H1 (cell line): ENCODE measurements at regions of chr7 and their contacts with region 1.

Region 1: GRCh38 chr7:130205084-130205947 is at the start of gene TMEM209:
- DNase-seq: peak; percentile 93 to 96
- H3K4me3 ChIP-seq: peak within 1 kb of the TSS; percentile 88 to 98 (median 92)
- H3K27ac ChIP-seq: peak within 1 kb of the TSS; percentile 97
- H3K4me1 ChIP-seq: no peaks in the 10 kb centered on the region
- H3K27me3 ChIP-seq: no peaks in the 10 kb centered on the region
- CTCF ChIP-seq: no peak
- EP300 ChIP-seq: no peak
- POLR2A ChIP-seq: peak; percentile 91 to 98
- RAD21 ChIP-seq: no peak; a peak in 1 of 4 replicates
- total RNA-seq, gene TMEM209: 25.6 and 28.5 TPM in 2 replicates

Region 2: DNA sequence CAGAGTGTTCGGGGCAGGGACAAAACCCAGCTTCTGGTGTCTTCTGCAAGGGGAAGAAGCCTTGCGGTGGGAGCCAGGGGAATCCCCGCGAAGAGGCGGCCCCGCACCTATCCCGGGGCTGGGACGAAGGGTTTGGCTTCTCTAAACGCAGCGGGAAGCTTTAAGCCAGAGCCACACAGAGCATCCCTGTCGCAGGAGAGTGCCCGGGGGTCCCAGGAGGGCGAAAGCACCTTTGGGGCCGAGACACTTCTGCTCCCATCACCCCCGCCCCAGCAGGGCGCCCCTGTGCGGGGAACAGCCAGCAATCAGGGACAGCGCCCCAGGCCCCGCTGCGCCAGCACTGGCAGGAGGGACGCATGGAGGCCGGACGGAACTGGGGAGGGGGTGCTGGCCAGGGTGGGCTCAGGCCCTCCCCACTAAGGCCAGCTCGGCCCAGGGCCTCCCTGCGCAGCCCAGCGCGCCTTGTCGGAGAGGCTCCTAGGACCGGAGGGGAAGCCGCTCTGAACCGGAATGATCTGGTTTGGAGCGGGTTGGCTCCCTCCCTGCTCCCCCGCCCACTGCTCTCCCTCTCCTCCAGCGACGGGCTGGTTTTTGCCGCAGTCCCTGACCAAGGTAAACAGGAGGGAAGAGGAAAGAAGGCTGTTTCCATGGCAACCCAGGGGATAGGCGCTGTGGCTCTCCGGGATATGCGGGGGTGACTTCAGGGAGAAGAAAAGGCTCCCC is 64.0 kb before region 1 on chr7:
- CTCF ChIA-PET with region 1: no interaction called
- POLR2A ChIA-PET with region 1: interaction called, 12 read pairs
- DNase-seq: peak; percentile 62 to 85
- H3K4me3 ChIP-seq: peak overlapping the region; percentile 48 to 65 (median 55)
- H3K27ac ChIP-seq: peak overlapping the region; percentile 87
- H3K4me1 ChIP-seq: peaks cover 0 to 15% (median 13%) of the 10 kb centered on the region in 4 experiments; a peak in 6 of 7 replicates
- H3K27me3 ChIP-seq: peaks cover 0 to 13% (median 8%) of the 10 kb centered on the region in 4 experiments; a peak in 5 of 7 replicates
- CTCF ChIP-seq: no peak
- EP300 ChIP-seq: peak in 1 of 2 experiments; percentile 88; a peak in 2 of 3 replicates
- POLR2A ChIP-seq: peak in 1 of 2 experiments; percentile 91; a peak in 2 of 3 replicates
- RAD21 ChIP-seq: peak in 1 of 2 experiments; percentile 8; a peak in 1 of 4 replicates

Region 3: GRCh38 chr7:130216750-130217149 is 11.4 kb after region 1 on chr7:
- CTCF ChIA-PET with region 1: interaction called, 4 read pairs
- POLR2A ChIA-PET with region 1: interaction called, 20 read pairs
- DNase-seq: no peak
- H3K4me3 ChIP-seq: no peak overlapping the region
- H3K27ac ChIP-seq: no peak overlapping the region
- H3K4me1 ChIP-seq: no peaks in the 10 kb centered on the region
- H3K27me3 ChIP-seq: no peaks in the 10 kb centered on the region
- CTCF ChIP-seq: peak in 2 of 3 experiments; percentile 15 to 40; a peak in 2 of 4 replicates
- EP300 ChIP-seq: no peak
- POLR2A ChIP-seq: no peak
- RAD21 ChIP-seq: peak; percentile 21 to 38; a peak in 3 of 4 replicates

Region 4: DNA sequence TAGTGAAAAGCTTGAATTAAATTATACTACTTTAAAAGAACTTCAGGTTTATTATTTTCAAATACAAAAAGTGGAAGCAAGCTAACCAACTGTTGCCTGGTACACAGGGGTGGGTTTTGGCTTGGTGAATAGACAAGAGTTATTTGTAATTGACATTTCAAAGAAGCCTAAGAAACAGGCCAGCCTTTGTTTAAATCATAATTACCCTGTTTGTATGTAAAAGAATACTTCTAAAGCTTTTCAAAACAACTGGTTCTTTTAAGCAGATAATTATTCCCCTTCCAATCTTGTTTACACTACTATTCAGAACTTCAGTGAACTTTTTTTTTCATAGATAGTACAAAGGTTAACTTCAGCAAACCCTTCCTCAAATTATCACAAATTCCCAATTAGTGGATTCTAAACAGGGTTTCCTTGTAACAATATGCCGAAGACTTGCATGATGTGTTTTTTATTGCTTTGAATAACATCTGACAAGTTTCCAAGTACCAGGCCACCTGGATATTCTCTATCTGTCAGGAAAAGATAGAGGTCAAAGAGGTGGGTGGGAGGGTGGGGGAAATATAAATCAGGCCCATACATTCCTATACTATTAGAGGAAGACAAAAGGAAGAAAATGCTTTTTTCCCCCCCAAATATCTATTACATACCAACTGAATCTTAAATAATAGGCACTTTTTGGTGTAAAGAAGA is 22.7 kb after region 1 on chr7:
- CTCF ChIA-PET with region 1: no interaction called
- POLR2A ChIA-PET with region 1: no interaction called
- DNase-seq: no peak
- H3K4me3 ChIP-seq: no peak overlapping the region
- H3K27ac ChIP-seq: no peak overlapping the region
- H3K4me1 ChIP-seq: peaks cover 0 to 4% (median under 1%) of the 10 kb centered on the region in 4 experiments; a peak in 1 of 7 replicates
- H3K27me3 ChIP-seq: no peaks in the 10 kb centered on the region
- CTCF ChIP-seq: no peak
- EP300 ChIP-seq: no peak
- POLR2A ChIP-seq: no peak
- RAD21 ChIP-seq: no peak

Region 5: GRCh38 chr7:130263130-130263529 is 57.8 kb after region 1 on chr7:
- CTCF ChIA-PET with region 1: no interaction called
- POLR2A ChIA-PET with region 1: no interaction called
- DNase-seq: no peak
- H3K4me3 ChIP-seq: no peak overlapping the region
- H3K27ac ChIP-seq: no peak overlapping the region
- H3K4me1 ChIP-seq: peaks cover 0 to 10% (median 2%) of the 10 kb centered on the region in 4 experiments; a peak in 2 of 7 replicates
- H3K27me3 ChIP-seq: no peaks in the 10 kb centered on the region
- CTCF ChIP-seq: no peak
- EP300 ChIP-seq: no peak
- POLR2A ChIP-seq: no peak
- RAD21 ChIP-seq: no peak

Region 6: GRCh38 chr7:130281266-130281665 is 76.0 kb after region 1 on chr7:
- CTCF ChIA-PET with region 1: no interaction called
- POLR2A ChIA-PET with region 1: no interaction called
- DNase-seq: no peak
- H3K4me3 ChIP-seq: no peak overlapping the region
- H3K27ac ChIP-seq: no peak overlapping the region
- H3K4me1 ChIP-seq: no peaks in the 10 kb centered on the region
- H3K27me3 ChIP-seq: no peaks in the 10 kb centered on the region
- CTCF ChIP-seq: no peak
- EP300 ChIP-seq: no peak
- POLR2A ChIP-seq: no peak
- RAD21 ChIP-seq: no peak